BJ (cell line): ENCODE measurements at regions of chr6 and their contacts with region 1.

Region 1: DNA sequence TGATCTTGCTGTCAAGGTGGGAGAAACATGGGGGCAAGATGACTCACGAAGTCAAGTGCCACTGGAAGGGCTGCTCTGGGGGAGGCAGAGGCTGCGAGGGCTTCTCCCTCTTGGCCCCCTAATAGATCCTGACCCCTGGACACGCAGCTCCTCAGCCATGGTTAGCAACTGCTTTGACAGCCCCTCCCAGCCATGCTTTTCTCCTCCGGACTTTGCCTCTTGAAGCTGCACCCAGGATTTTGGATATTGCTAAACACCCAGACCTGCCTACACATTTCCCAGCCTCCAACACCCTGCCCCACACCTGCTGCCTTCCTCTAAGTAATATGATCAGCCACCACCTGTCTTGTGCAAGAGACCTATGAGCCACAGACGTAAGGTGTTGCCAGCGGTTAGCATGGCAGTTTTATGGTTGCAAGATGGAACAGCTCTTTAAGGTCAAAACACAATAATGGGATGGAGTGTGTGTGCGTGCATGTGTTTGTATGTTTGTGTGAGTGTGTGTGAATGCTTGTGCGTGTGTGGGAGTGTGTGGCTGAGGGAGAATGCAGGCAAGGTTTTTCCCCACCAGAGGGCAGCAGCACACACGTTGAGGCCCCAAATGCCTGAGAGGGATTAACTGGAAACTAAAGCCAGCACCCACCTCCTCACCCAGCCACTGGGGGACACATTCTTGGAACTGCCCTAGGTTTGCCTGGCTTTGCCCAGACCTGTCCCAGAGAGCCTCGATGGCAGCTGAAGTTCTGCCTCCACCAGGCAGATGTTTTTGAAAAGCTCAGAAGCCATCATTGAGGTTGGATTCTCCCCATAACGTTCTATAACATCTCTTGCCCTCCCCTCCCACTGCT is 2.5 kb downstream of the IP6K3 start:
- DNase-seq: no peak
- H3K4me3 ChIP-seq: no peak overlapping the region
- H3K27me3 ChIP-seq: no peaks in the 10 kb centered on the region
- CTCF ChIP-seq: peak; percentile 93

Region 2: GRCh38 chr6:33727932-33728331 is 16.3 kb before region 1 on chr6:
- CTCF ChIA-PET with region 1: interaction called, 37 read pairs
- POLR2A ChIA-PET with region 1: no interaction called
- DNase-seq: no peak
- H3K4me3 ChIP-seq: no peak overlapping the region
- H3K27me3 ChIP-seq: peaks cover 14% of the 10 kb centered on the region
- CTCF ChIP-seq: no peak

Region 3: DNA sequence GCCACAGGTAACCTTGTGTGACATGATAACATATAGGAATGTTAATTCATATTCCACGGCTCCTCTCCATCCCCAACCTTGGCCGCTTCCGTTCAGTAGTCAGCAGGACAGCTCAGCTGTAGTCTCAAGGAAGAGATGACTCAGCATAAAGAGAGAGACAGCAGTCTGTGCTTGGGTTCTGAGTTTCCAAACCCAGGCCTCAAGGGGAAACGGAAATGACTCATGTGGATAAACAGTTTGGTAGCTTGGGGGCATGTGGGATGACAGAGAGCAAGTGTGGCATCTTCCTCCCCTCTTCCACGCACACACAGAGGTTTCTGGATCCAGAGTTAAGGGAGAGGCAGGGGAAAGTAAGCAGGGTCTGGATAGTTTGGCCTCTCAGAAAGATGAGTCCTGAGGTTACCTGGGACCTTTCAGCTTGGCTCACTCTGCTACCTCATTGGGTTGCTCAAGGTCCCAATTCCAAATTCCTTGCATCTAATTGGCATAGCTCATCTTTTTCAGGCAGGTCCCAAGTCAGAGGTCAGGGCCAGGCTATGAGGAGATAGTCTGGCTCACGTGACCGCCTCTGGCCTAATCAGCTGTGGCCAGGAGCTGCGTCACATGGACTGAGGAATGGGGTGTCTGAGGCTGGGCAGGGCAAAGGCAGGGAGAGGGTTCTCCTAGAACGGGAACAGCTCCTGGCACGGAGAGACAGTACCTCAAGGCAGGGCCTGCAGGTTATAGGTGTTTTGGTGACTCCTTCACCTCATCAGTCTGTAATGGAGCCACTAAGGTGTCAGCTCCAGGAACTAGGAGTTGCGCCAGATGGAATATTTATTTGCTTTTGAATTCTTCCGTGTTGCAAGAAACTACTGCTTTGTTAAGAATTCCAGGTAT is 96.1 kb after region 1 on chr6:
- CTCF ChIA-PET with region 1: no interaction called
- POLR2A ChIA-PET with region 1: no interaction called
- DNase-seq: peak; percentile 92
- H3K4me3 ChIP-seq: no peak overlapping the region
- H3K27me3 ChIP-seq: no peaks in the 10 kb centered on the region
- CTCF ChIP-seq: no peak